CD8-positive, alpha-beta memory T cell (primary cell): ENCODE measurements at regions of chr2 and their contacts with region 1.

Region 1: DNA sequence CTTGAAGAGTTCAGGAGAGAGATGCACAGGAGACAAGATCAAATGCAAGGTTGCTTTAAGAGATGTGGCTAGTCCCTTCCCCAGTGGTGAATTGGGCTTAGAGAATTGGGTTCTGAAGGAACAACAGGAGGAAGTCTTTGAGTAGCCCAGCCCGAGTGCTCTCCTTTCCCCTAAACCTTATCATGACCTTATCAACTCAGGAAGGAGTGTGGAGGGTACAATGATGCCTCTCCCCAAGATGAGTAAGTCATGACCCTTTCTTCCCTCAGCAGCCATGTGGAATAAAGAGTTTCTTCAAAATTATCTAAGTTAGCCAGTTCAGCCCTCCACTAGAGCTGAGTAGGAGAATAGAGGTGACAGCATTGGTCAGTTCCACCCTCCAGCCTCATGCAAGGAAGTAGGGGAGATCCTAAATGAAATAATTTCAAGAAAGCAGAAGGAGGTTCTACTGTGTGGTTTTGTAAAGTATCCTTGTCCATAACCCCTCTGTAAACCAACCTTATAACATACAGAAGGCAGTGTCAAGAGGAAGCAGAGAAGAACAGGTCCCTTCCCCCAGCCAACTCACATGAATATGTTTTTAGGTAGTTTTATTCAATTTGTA is 88.4 kb downstream of the ARHGAP15 start:
- DNase-seq: no peak
- H3K4me3 ChIP-seq: no peak overlapping the region
- H3K4me3 Mint-ChIP-seq: peak overlapping the region in 3 of 7 donors; percentile 19 to 72 (median 24)
- H3K27ac ChIP-seq: no peak overlapping the region
- H3K27ac Mint-ChIP-seq: peak overlapping the region; percentile 33 to 90 (median 68)
- H3K4me1 ChIP-seq: peaks cover 6% of the 10 kb centered on the region
- H3K4me1 Mint-ChIP-seq: peaks cover 44 to 68% (median 67%) of the 10 kb centered on the region in 3 donors
- H3K27me3 ChIP-seq: no peaks in the 10 kb centered on the region
- H3K27me3 Mint-ChIP-seq: no peaks in the 10 kb centered on the region

Region 2: GRCh38 chr2:143205106-143205764 is 12.4 kb before region 1 on chr2:
- CTCF ChIA-PET with region 1: interaction called, 15 read pairs
- POLR2A ChIA-PET with region 1: interaction called, 5 read pairs
- DNase-seq: peak in 2 of 5 donors; percentile 34 to 36
- H3K4me3 ChIP-seq: no peak overlapping the region
- H3K4me3 Mint-ChIP-seq: peak overlapping the region in 2 of 7 donors; percentile 39 to 54
- H3K27ac ChIP-seq: no peak overlapping the region
- H3K27ac Mint-ChIP-seq: peak overlapping the region in 7 of 8 donors; percentile 28 to 90 (median 69)
- H3K4me1 ChIP-seq: peaks cover 36% of the 10 kb centered on the region
- H3K4me1 Mint-ChIP-seq: peaks cover 61 to 76% (median 65%) of the 10 kb centered on the region in 3 donors
- H3K27me3 ChIP-seq: no peaks in the 10 kb centered on the region
- H3K27me3 Mint-ChIP-seq: no peaks in the 10 kb centered on the region

Region 3: GRCh38 chr2:143607231-143608062 is 389.8 kb after region 1 on chr2:
- CTCF ChIA-PET with region 1: no interaction called
- POLR2A ChIA-PET with region 1: no interaction called
- DNase-seq: no peak
- H3K4me3 ChIP-seq: no peak overlapping the region
- H3K4me3 Mint-ChIP-seq: no peak overlapping the region
- H3K27ac ChIP-seq: no peak overlapping the region
- H3K27ac Mint-ChIP-seq: peak overlapping the region in 4 of 8 donors; percentile 13 to 85 (median 70)
- H3K4me1 ChIP-seq: no peaks in the 10 kb centered on the region
- H3K4me1 Mint-ChIP-seq: peaks cover 35 to 71% (median 64%) of the 10 kb centered on the region in 3 donors
- H3K27me3 ChIP-seq: no peaks in the 10 kb centered on the region
- H3K27me3 Mint-ChIP-seq: no peaks in the 10 kb centered on the region